ENCODE measurements at regions of chr5 and their contacts with region 1.

Region 1: GRCh38 chr5:109089191-109089590 is 320.6 kb downstream of the PJA2 start:
- DNase-seq: peak; percentile 5
- ATAC-seq: peak; percentile 37; the same call in 1 of the 2 replicates
- H3K4me3 ChIP-seq: no peak overlapping the region
- H3K27ac ChIP-seq: no peak overlapping the region
- H3K4me1 ChIP-seq: no peaks in the 10 kb centered on the region
- H3K27me3 ChIP-seq: no peaks in the 10 kb centered on the region
- CTCF ChIP-seq: no peak
- POLR2A ChIP-seq: no peak
- RAD21 ChIP-seq: no peak

Region 2: GRCh38 chr5:108814551-108814950 is 274.6 kb before region 1 on chr5:
- CTCF ChIA-PET with region 1: no interaction called
- POLR2A ChIA-PET with region 1: no interaction called
- dilution Hi-C with region 1: no loop called
- in situ Hi-C with region 1: no loop called
- intact Hi-C with region 1: no loop called
- DNase-seq: no peak
- ATAC-seq: peak; percentile 53; the same call in 1 of the 2 replicates
- H3K4me3 ChIP-seq: no peak overlapping the region
- H3K27ac ChIP-seq: no peak overlapping the region
- H3K4me1 ChIP-seq: no peaks in the 10 kb centered on the region
- H3K27me3 ChIP-seq: no peaks in the 10 kb centered on the region
- CTCF ChIP-seq: no peak
- POLR2A ChIP-seq: no peak
- RAD21 ChIP-seq: no peak

Region 3: GRCh38 chr5:109102096-109102690 is 13.0 kb after region 1 on chr5:
- CTCF ChIA-PET with region 1: interaction called, 3 read pairs
- POLR2A ChIA-PET with region 1: no interaction called
- dilution Hi-C with region 1: no loop called
- in situ Hi-C with region 1: no loop called
- intact Hi-C with region 1: loop called (anchors 2 kb)
- DNase-seq: no peak
- ATAC-seq: no peak
- H3K4me3 ChIP-seq: no peak overlapping the region
- H3K27ac ChIP-seq: no peak overlapping the region
- H3K4me1 ChIP-seq: peaks cover 1% of the 10 kb centered on the region; the same call in 1 of the 2 replicates
- H3K27me3 ChIP-seq: no peaks in the 10 kb centered on the region
- CTCF ChIP-seq: no peak
- POLR2A ChIP-seq: no peak
- RAD21 ChIP-seq: no peak

Region 4: DNA sequence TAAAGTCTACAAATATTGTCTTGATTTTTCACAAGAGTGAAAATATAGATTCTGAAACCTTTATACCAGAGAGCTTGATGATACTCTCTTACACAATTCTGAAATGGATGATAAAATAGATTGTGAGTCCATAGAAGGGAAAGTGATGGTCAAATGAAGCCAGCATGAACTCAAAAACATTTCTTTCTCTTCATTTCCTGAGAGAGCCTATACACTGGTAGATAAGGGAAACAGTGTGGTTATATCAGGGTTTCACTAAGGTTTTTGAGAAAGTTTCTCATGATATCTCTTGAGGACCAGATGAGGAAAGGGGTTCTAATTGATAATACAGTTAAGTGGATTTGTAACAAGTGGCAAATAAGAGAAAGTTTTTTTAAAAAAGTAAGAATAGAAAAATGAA is 66.4 kb after region 1 on chr5:
- CTCF ChIA-PET with region 1: no interaction called
- POLR2A ChIA-PET with region 1: no interaction called
- dilution Hi-C with region 1: no loop called
- in situ Hi-C with region 1: no loop called
- intact Hi-C with region 1: no loop called
- DNase-seq: no peak
- ATAC-seq: no peak
- H3K4me3 ChIP-seq: no peak overlapping the region
- H3K27ac ChIP-seq: no peak overlapping the region
- H3K4me1 ChIP-seq: no peaks in the 10 kb centered on the region
- H3K27me3 ChIP-seq: no peaks in the 10 kb centered on the region
- CTCF ChIP-seq: no peak
- POLR2A ChIP-seq: no peak
- RAD21 ChIP-seq: no peak

Region 5: DNA sequence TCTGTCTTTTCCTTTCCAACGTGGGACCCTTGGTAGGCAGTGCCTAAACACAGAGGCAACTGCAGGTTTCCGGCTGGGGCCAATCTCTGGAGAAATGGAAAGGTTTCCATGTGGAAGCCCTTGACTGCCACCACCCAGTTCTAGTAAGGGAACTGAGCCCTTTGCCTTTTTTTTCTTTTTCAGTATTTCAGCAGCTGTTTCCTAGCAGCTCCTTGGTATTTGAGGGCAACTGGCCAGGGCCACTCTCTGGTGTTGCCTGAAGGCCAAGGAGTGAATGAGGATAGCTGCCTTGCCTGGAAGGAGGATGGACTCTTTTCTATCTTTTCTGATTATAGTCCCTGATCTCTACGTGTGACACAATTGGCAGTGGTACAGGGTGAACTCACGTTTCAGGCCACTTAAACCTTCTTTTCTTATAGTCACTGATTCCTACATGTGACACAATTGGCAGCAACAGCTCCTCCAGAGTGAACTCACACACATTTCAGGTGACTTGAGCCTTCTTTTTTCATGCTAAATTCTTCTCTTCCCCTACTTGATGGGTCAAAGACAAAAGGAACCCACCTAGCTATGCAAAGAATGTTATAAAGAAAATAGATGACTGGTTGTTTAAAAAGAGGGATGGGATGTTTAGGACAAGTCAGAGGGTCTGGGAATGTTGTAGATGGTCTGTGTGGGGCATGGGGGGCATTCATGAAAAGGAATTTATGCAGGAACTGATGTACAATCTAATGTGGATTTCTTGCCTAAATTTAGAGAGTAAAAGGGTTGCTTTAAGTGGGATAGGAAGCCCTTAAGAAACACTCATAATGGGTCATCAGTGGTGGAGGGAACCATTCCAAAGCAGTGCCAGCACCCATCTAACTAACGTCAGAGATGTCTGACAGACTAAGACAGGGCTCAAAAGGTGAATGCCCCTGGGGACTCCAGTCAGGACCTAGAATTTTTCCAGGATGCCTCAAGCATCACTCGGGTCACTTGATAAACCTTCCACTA is 1447.2 kb after region 1 on chr5:
- CTCF ChIA-PET with region 1: no interaction called
- POLR2A ChIA-PET with region 1: no interaction called
- dilution Hi-C with region 1: no loop called
- in situ Hi-C with region 1: no loop called
- intact Hi-C with region 1: no loop called
- DNase-seq: no peak
- ATAC-seq: no peak; the same call in 1 of the 2 replicates
- H3K4me3 ChIP-seq: no peak overlapping the region
- H3K27ac ChIP-seq: no peak overlapping the region
- H3K4me1 ChIP-seq: no peaks in the 10 kb centered on the region
- H3K27me3 ChIP-seq: no peaks in the 10 kb centered on the region
- CTCF ChIP-seq: no peak
- POLR2A ChIP-seq: no peak
- RAD21 ChIP-seq: no peak